GM12878 (cell line): ENCODE measurements at regions of chr14 and their contacts with region 1.

Region 1: GRCh38 chr14:98219638-98220037 is 1052.4 kb downstream of the BCL11B start:
- DNase-seq: no peak
- ATAC-seq: peak; percentile 24; the same call in 1 of the 3 replicates
- H3K4me3 ChIP-seq: no peak overlapping the region
- H3K27ac ChIP-seq: no peak overlapping the region
- H3K4me1 ChIP-seq: no peaks in the 10 kb centered on the region; the same call in 1 of the 2 replicates
- H3K27me3 ChIP-seq: no peaks in the 10 kb centered on the region
- CTCF ChIP-seq: no peak
- EP300 ChIP-seq: no peak
- POLR2A ChIP-seq: no peak
- RAD21 ChIP-seq: no peak

Region 2: DNA sequence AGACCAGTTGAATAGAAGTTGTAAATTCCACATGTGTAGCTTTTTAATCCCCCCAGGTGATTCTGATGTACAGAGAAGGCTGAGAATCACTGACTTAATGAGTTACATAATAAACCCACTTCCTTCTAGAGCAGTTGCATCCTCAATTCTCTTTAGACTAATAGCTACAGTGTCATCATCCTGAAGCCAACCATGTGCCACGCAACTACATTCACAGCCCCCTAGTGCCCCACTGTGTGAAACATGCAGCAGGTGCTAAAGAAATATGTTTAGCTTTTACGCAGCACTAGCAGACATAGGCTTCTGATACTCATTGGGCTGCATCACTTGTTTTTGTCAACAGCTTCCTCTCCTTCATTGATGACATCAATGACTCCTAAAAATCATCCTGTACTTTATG is 115.9 kb before region 1 on chr14:
- CTCF ChIA-PET with region 1: no interaction called
- POLR2A ChIA-PET with region 1: no interaction called
- RAD21 ChIA-PET with region 1: no interaction called
- SMC1A ChIA-PET with region 1: no interaction called
- in situ Hi-C with region 1: no loop called
- intact Hi-C with region 1: no loop called
- DNase-seq: no peak
- ATAC-seq: no peak; the same call in 2 of the 3 replicates
- H3K4me3 ChIP-seq: no peak overlapping the region
- H3K27ac ChIP-seq: no peak overlapping the region
- H3K4me1 ChIP-seq: no peaks in the 10 kb centered on the region
- H3K27me3 ChIP-seq: no peaks in the 10 kb centered on the region
- CTCF ChIP-seq: no peak
- EP300 ChIP-seq: no peak
- POLR2A ChIP-seq: no peak
- RAD21 ChIP-seq: no peak

Region 3: GRCh38 chr14:98182393-98183055 is 37.1 kb before region 1 on chr14:
- CTCF ChIA-PET with region 1: no interaction called
- POLR2A ChIA-PET with region 1: no interaction called
- RAD21 ChIA-PET with region 1: interaction called, 3 read pairs
- SMC1A ChIA-PET with region 1: interaction called, 13 read pairs
- in situ Hi-C with region 1: no loop called
- intact Hi-C with region 1: no loop called
- DNase-seq: no peak
- ATAC-seq: peak; percentile 35; the same call in 2 of the 3 replicates
- H3K4me3 ChIP-seq: no peak overlapping the region
- H3K27ac ChIP-seq: no peak overlapping the region
- H3K4me1 ChIP-seq: no peaks in the 10 kb centered on the region
- H3K27me3 ChIP-seq: no peaks in the 10 kb centered on the region
- CTCF ChIP-seq: no peak
- EP300 ChIP-seq: no peak
- POLR2A ChIP-seq: no peak
- RAD21 ChIP-seq: no peak

Region 4: DNA sequence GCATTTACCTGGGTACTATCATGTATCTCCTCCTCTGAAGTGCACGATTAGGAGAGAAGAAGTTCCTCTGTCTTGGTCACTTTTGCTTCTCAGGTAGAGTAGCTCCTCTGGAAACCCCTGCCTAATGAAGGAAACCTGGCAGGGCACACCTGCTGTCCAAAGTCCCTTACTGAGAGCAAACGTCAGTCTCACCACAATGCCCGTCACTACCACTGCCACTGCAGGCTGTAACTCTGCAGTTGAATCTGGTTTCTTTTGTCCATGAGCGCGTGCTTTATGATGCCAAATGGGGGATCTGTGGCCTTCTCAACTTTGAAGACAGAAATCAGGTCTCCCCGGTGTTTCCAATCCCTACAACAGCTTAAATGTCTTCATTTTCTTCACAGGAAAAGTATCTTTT is 16.2 kb before region 1 on chr14:
- CTCF ChIA-PET with region 1: interaction called, 10 read pairs
- POLR2A ChIA-PET with region 1: interaction called, 46 read pairs
- RAD21 ChIA-PET with region 1: interaction called, 57 read pairs
- SMC1A ChIA-PET with region 1: interaction called, 85 read pairs
- in situ Hi-C with region 1: no loop called
- intact Hi-C with region 1: no loop called
- DNase-seq: no peak
- ATAC-seq: no peak
- H3K4me3 ChIP-seq: no peak overlapping the region
- H3K27ac ChIP-seq: no peak overlapping the region
- H3K4me1 ChIP-seq: peaks cover 3% of the 10 kb centered on the region
- H3K27me3 ChIP-seq: no peaks in the 10 kb centered on the region
- CTCF ChIP-seq: no peak
- EP300 ChIP-seq: no peak
- POLR2A ChIP-seq: no peak
- RAD21 ChIP-seq: no peak